HepG2 (cell line): ENCODE measurements at regions of chr22 and their contacts with region 1.

Region 1: GRCh38 chr22:37588546-37589215 is 8.8 kb upstream of the LGALS2 start:
- DNase-seq: no peak
- ATAC-seq: peak; percentile 32; the same call in 2 of the 3 replicates
- H3K4me3 ChIP-seq: no peak overlapping the region
- H3K27ac ChIP-seq: no peak overlapping the region
- H3K4me1 ChIP-seq: peaks cover 62% of the 10 kb centered on the region
- H3K27me3 ChIP-seq: peaks cover 0 to 24% of the 10 kb centered on the region in 2 experiments; a peak in 3 of 5 replicates
- CTCF ChIP-seq: no peak
- EP300 ChIP-seq: no peak
- POLR2A ChIP-seq: no peak
- RAD21 ChIP-seq: no peak

Region 2: DNA sequence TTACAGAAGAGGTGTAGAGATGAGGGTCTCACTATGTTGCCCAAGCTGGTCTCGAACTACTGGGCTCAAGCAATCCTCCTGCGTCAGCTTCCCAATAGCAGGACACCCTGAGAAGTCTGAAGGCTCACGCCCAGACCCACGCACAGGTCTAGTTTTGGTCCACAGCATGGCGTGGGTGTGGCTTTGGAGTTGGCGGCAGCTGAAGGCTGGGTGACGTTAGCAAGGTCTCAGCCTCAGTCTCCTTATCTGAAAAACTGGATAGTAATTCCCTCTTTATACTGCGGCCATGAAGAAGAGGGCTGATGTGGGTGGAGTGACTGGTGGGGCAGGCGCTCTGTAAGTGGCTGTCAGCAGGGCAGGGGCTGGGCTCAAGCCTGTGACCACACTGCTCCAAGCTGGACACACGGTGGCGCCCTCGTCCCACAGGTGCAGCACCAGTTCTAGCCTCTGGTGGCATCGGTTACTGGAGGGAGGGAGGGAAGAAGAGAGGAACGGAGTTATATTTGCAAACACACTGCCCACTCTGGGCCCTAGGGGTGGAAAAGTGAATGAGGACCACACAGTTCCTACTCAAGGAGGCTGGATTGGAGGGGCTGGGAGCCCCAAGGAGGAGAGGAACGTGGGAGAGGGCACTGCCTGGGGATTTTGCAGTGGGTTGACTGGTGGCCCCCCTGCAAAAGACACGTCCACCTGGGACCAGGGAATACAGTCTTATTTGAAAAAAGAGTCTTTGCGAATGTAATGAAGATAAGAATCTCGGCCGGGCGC is 49.9 kb before region 1 on chr22:
- CTCF ChIA-PET with region 1: interaction called, 31 read pairs
- POLR2A ChIA-PET with region 1: interaction called, 11 read pairs
- in situ Hi-C with region 1: no loop called
- intact Hi-C with region 1: loop called (anchors 1 kb)
- DNase-seq: peak; percentile 88
- ATAC-seq: peak; percentile 98
- H3K4me3 ChIP-seq: peak overlapping the region in 1 of 3 experiments; percentile 32; a peak in 2 of 6 replicates
- H3K27ac ChIP-seq: no peak overlapping the region
- H3K4me1 ChIP-seq: peaks cover 77% of the 10 kb centered on the region
- H3K27me3 ChIP-seq: 0 out of 5 replicates have a peak, but pooled peaks cover 0 to 2% of the 10 kb centered on the region in 2 experiments
- CTCF ChIP-seq: peak; percentile 100
- EP300 ChIP-seq: peak; percentile 27 to 36; a peak in 2 of 4 replicates
- POLR2A ChIP-seq: no peak
- RAD21 ChIP-seq: peak; percentile 99

Region 3: DNA sequence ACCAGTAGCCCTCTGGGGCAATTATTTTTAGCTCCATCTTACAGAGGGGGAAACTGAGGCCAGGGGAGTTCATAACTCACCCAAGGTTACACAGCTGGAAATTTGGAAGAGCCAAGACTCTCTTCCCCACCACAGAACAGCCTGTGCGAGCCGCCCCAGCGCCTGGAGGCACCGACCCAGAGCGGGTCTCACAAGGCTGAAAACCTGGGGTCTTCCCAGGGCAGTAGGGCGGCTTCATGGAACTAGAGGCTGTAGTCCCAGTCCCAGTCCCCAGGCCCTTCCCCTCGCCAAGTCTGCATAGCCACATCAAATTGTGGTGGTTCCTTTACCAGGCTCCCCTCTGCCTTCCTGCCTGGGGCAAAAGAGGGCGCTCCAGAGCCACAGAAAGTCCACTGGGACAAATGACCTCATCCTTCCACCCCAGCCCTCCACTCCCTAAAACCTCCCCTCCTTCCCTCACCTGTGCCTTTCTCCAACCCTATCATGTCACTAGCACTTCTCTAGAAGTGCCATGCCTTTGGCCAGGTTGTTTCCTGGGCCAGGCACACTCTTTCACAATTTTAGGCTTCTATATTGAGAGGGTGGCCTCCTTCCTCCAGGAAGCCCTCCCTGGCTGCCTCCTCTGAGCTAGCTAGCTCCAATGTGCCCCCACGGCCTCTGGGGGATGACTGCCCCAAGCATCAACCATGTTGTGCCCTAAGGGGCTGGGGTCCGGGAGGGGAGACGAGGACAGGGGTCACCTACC is 43.6 kb before region 1 on chr22:
- CTCF ChIA-PET with region 1: interaction called, 31 read pairs
- POLR2A ChIA-PET with region 1: interaction called, 15 read pairs
- in situ Hi-C with region 1: no loop called
- intact Hi-C with region 1: loop called (anchors 1 kb)
- DNase-seq: peak; percentile 81
- ATAC-seq: peak; percentile 55
- H3K4me3 ChIP-seq: peak overlapping the region; percentile 32 to 70 (median 39); a peak in 5 of 6 replicates
- H3K27ac ChIP-seq: peak overlapping the region; percentile 90
- H3K4me1 ChIP-seq: peaks cover 89% of the 10 kb centered on the region
- H3K27me3 ChIP-seq: no peaks in the 10 kb centered on the region
- CTCF ChIP-seq: peak; percentile 95
- EP300 ChIP-seq: no peak
- POLR2A ChIP-seq: no peak
- RAD21 ChIP-seq: peak; percentile 83; the same call in 1 of the 2 replicates

Region 4: GRCh38 chr22:37575490-37576003 is 13.1 kb before region 1 on chr22:
- CTCF ChIA-PET with region 1: interaction called, 3 read pairs
- POLR2A ChIA-PET with region 1: interaction called, 113 read pairs
- in situ Hi-C with region 1: no loop called
- intact Hi-C with region 1: no loop called
- DNase-seq: no peak
- ATAC-seq: no peak
- H3K4me3 ChIP-seq: no peak overlapping the region
- H3K27ac ChIP-seq: no peak overlapping the region
- H3K4me1 ChIP-seq: peaks cover 67% of the 10 kb centered on the region
- H3K27me3 ChIP-seq: 0 out of 5 replicates have a peak, but pooled peaks cover 0 to 1% of the 10 kb centered on the region in 2 experiments
- CTCF ChIP-seq: no peak
- EP300 ChIP-seq: no peak
- POLR2A ChIP-seq: no peak
- RAD21 ChIP-seq: no peak